Prostate gland (tissue), 2 donors: ENCODE measurements at regions of chr5 and their contacts with region 1.

Region 1: GRCh38 chr5:123610665-123611405 is 98.9 kb downstream of the CSNK1G3 start:
- DNase-seq: peak; percentile 26
- H3K4me3 ChIP-seq: no peak overlapping the region
- H3K27ac ChIP-seq: no peak overlapping the region
- H3K4me1 ChIP-seq: no peaks in the 10 kb centered on the region
- H3K27me3 ChIP-seq: no peaks in the 10 kb centered on the region
- CTCF ChIP-seq: peak; percentile 81 to 95 (median 90)
- POLR2A ChIP-seq: no peak

Region 2: DNA sequence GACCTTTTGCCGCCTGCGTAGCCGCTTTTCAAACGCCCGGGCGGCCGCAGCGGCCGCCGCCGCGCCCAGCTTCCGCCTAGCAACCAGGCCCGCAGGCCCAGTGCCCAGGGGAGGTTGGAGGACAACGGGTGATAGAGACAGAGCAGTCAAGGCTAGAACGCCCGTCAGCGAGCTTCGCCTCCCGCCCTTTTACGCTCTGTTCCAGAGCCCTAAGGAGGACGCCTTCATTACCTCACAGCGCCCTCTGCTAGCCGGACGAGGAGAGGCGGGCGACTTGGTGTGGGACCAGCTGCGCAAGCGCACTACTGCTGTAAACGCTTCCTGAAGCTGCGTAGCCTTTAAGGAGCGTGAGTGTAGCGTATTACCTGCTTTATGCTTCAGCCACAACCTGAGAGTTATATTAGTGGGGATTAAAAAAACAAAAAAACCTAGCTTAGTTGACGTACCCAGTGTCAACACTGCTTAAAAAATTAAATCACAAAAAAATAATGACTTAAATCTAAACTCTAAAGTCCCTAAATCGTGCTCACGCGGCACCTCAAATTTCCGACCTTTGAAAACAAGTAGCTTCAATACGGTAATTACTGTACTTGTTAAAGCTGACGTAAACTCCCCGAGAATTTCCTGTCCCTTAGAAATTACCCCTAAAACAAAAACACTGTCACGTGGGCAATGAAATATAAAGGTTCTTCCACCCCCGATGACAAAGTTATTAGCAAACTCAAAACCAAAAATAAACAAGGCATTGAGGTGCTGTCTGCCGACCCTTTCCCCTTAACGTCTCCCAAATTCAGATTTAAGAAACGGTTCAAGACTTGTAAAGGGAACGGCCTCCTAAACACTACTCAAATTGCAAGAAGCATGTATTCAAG is 187.3 kb before region 1 on chr5 and contains the start of gene CEP120:
- intact Hi-C with region 1: loop called (anchors 5 kb)
- DNase-seq: peak; percentile 99
- H3K4me3 ChIP-seq: peak within 1 kb of the TSS; percentile 61 to 68
- H3K27ac ChIP-seq: peak within 1 kb of the TSS; percentile 81 to 85
- H3K4me1 ChIP-seq: no peaks in the 10 kb centered on the region
- H3K27me3 ChIP-seq: no peaks in the 10 kb centered on the region
- CTCF ChIP-seq: peak; percentile 66 to 89 (median 78)
- POLR2A ChIP-seq: peak; percentile 85
- total RNA-seq, gene CEP120: 14.5 to 37.5 TPM

Region 3: DNA sequence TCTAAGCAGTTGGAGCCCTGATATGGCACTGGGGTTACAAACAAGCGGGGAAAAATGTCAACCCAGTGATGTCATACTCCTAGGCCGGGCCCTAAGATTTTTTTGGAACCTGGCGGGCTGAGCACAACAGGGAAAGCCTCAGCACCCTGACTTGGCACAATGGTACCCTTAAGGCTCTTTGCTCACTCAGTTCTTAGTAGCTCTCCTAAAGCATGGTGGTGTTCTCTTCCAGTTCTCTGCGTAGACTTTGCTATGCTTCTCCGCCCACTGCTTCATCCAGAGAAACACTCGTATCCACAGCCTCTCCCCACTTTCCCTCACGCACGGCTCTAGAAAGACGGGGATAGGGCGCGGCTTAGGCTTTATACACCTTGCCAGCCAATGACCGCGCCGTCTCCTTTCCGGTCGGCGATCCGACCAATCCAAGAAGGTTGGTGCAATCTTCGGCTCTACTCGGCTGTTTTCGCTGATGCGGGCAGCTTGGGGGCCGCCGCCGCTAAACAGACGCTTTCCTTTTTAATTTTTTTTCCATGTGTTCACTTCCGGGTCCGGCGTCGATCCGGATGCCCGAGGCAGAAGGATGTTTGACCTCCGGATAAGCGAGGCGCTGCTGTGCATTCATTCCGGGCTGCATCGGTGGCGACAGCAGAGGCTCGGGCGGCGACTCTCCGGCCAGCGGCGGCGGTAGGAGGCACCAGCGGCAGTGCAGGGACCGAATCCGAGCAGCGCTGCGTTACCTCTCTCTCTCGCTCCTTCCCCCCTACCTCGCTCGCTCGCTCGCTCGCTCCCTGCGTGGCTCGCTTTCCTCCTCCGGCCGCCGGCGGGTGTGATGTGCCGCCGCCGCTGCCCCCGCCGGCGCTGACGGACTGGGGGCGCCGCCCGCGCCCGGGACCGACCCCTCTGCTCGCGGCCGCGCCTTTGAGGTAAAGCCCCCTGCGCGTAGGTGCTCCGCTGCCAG is 98.9 kb before region 1 on chr5 and contains the start of gene CSNK1G3:
- intact Hi-C with region 1: loop called (anchors 10 kb)
- DNase-seq: peak; percentile 95
- H3K4me3 ChIP-seq: peak within 1 kb of the TSS; percentile 90 to 91
- H3K27ac ChIP-seq: peak within 1 kb of the TSS; percentile 89 to 91
- H3K4me1 ChIP-seq: no peaks in the 10 kb centered on the region
- H3K27me3 ChIP-seq: no peaks in the 10 kb centered on the region
- CTCF ChIP-seq: peak in 1 of 4 experiments; percentile 9
- POLR2A ChIP-seq: peak; percentile 75
- total RNA-seq, gene CSNK1G3: 37.1 to 43.1 TPM